Prostate gland (tissue), 2 donors: ENCODE measurements at regions of chr15 and their contacts with region 1.

Region 1: GRCh38 chr15:101294731-101295606 is at the start of gene SNRPA1:
- DNase-seq: peak; percentile 96
- H3K4me3 ChIP-seq: peak within 1 kb of the TSS; percentile 71 to 94
- H3K27ac ChIP-seq: peak within 1 kb of the TSS; percentile 88 to 90
- H3K4me1 ChIP-seq: no peaks in the 10 kb centered on the region
- H3K27me3 ChIP-seq: no peaks in the 10 kb centered on the region
- CTCF ChIP-seq: peak in 2 of 4 experiments; percentile 29 to 34
- POLR2A ChIP-seq: peak; percentile 81
- total RNA-seq, gene SNRPA1: 23.6 to 55.3 TPM

Region 2: GRCh38 chr15:101269479-101270223 is 25.3 kb before region 1 on chr15:
- intact Hi-C with region 1: no loop called
- DNase-seq: no peak
- H3K4me3 ChIP-seq: no peak overlapping the region
- H3K27ac ChIP-seq: no peak overlapping the region
- H3K4me1 ChIP-seq: no peaks in the 10 kb centered on the region
- H3K27me3 ChIP-seq: no peaks in the 10 kb centered on the region
- CTCF ChIP-seq: peak in 1 of 4 experiments; percentile 16
- POLR2A ChIP-seq: no peak

Region 3: GRCh38 chr15:101641166-101641764 is 346.3 kb after region 1 on chr15:
- intact Hi-C with region 1: loop called (anchors 1 kb)
- DNase-seq: peak; percentile 57
- H3K4me3 ChIP-seq: no peak overlapping the region
- H3K27ac ChIP-seq: no peak overlapping the region
- H3K4me1 ChIP-seq: no peaks in the 10 kb centered on the region
- H3K27me3 ChIP-seq: no peaks in the 10 kb centered on the region
- CTCF ChIP-seq: peak; percentile 83 to 95 (median 90)
- POLR2A ChIP-seq: no peak

Region 4: GRCh38 chr15:101652098-101652782 is 357.3 kb after region 1 on chr15 and contains the start of gene TM2D3:
- intact Hi-C with region 1: loop called (anchors 5 kb)
- DNase-seq: peak; percentile 91
- H3K4me3 ChIP-seq: peak within 1 kb of the TSS; percentile 91 to 92
- H3K27ac ChIP-seq: peak within 1 kb of the TSS; percentile 96
- H3K4me1 ChIP-seq: peaks cover 5% of the 10 kb centered on the region
- H3K27me3 ChIP-seq: no peaks in the 10 kb centered on the region
- CTCF ChIP-seq: peak; percentile 63 to 93 (median 81)
- POLR2A ChIP-seq: peak; percentile 93
- total RNA-seq, gene TM2D3: 48.6 to 67.0 TPM